ENCODE measurements at regions of chr11 and their contacts with region 1.

Region 1: DNA sequence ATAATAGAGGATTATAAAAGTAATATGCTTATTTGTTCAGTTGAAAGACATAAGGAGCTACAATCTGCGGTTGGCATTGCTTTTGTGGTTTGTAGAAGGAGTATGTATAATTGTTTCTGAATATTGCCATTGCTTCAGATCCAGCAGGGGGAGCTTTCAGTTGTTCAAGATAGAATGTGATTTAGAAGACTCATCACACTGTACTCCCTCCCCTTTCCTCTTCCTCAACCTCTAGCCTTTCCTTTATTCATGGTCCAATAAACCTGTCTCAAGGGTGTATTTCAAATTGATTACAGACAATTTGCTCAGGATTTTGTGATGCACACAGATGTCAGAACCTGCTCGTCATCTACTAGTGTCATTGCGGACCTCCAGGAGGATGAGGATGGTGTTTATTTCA is 9.8 kb downstream of the PRMT3 start:
- DNase-seq: peak; percentile 78
- H3K4me3 Mint-ChIP-seq: no peak overlapping the region
- H3K27ac Mint-ChIP-seq: peak overlapping the region; percentile 41
- H3K4me1 Mint-ChIP-seq: peaks cover 11% of the 10 kb centered on the region
- H3K27me3 Mint-ChIP-seq: no peaks in the 10 kb centered on the region

Region 2: GRCh38 chr11:20192151-20192550 is 205.1 kb before region 1 on chr11:
- intact Hi-C with region 1: no loop called
- DNase-seq: no peak
- H3K4me3 Mint-ChIP-seq: no peak overlapping the region
- H3K27ac Mint-ChIP-seq: no peak overlapping the region
- H3K4me1 Mint-ChIP-seq: no peaks in the 10 kb centered on the region
- H3K27me3 Mint-ChIP-seq: peaks cover 5% of the 10 kb centered on the region

Region 3: DNA sequence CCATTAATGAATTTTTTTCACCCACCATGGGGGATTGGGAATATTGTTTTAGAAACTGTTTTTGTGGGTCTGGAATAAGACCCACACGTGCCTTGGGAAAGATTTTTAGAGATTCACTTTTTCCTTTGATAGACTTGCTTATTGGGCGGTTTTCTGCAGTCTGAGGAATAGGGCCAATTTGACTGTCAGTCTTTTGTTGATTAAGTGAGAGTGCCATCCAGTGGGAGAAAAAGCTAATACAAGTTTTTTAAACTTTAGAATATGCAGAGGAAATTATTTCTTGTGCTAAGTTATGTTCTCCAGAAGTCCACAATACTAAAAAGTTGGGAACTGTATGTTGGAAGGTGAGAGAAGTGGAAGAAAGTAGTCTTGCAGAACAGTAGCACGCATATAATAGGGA is 46.3 kb after region 1 on chr11:
- intact Hi-C with region 1: loop called (anchors 2 kb)
- DNase-seq: no peak
- H3K4me3 Mint-ChIP-seq: no peak overlapping the region
- H3K27ac Mint-ChIP-seq: no peak overlapping the region
- H3K4me1 Mint-ChIP-seq: peaks cover 2% of the 10 kb centered on the region
- H3K27me3 Mint-ChIP-seq: no peaks in the 10 kb centered on the region

Region 4: DNA sequence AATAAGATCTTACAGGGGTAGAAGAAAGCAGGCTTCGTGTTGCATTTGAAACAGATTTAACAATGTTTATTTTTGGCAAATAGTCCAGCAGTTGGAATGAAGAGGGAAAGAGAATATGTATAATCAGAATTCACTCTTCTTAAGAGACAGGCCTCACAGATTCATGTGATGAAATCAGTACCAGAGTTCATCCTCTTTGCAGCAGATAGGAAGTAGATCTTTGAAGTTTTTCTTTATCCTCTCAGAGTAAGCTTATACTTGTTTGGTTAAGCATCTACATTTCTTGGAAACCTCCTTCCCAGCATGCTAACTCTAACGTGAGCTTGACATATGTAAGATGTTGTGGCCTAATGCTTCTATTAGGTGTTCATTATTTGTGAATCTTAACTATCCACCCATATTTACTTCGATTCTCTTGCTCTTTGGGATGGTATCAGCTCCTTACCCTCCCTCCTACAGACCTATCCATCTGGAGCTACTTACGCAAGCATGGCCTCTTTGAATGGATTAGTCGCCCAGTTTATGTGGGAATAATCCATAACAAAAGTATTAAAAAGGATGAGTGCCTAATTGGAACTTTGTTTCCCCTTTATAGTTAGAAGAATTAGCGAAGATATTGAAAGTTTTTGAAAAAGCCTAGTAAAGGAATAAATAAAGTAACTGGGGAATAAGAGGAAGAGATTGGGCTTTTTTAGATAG is 70.4 kb after region 1 on chr11:
- intact Hi-C with region 1: no loop called
- DNase-seq: no peak
- H3K4me3 Mint-ChIP-seq: no peak overlapping the region
- H3K27ac Mint-ChIP-seq: no peak overlapping the region
- H3K4me1 Mint-ChIP-seq: peaks cover 2% of the 10 kb centered on the region
- H3K27me3 Mint-ChIP-seq: no peaks in the 10 kb centered on the region

Region 5: GRCh38 chr11:20609727-20610707 is 212.7 kb after region 1 on chr11:
- intact Hi-C with region 1: loop called (anchors 1 kb)
- DNase-seq: peak; percentile 90
- H3K4me3 Mint-ChIP-seq: peak overlapping the region; percentile 69
- H3K27ac Mint-ChIP-seq: no peak overlapping the region
- H3K4me1 Mint-ChIP-seq: peaks cover 6% of the 10 kb centered on the region
- H3K27me3 Mint-ChIP-seq: peaks cover 65% of the 10 kb centered on the region